ENCODE measurements at regions of chr9 and their contacts with region 1.

Region 1: DNA sequence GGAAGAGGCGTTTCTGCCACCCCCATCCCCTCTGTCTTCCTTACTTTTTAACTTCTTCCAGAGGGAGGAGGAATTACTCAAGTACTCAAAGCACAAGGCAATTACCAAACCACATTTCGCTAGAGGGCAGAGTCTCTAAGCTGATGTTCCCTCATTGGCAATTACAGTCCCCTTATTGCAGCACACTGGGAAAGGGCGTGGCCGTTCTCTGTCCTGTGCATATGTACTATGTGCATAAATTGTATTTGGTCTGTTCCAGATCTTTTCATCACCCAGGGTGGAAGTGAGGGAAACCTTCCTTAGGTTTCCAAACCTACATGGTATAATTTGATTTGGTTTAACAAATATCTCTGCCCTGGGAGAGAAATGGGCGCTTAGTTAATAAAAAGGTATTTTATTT is 29.8 kb upstream of the ALDOB start:
- DNase-seq: peak; percentile 25
- ATAC-seq: peak; percentile 65
- H3K4me3 Mint-ChIP-seq: no peak overlapping the region
- H3K27ac Mint-ChIP-seq: no peak overlapping the region
- H3K4me1 Mint-ChIP-seq: peaks cover 66% of the 10 kb centered on the region
- H3K27me3 Mint-ChIP-seq: no peaks in the 10 kb centered on the region
- CTCF ChIP-seq: no peak

Region 2: DNA sequence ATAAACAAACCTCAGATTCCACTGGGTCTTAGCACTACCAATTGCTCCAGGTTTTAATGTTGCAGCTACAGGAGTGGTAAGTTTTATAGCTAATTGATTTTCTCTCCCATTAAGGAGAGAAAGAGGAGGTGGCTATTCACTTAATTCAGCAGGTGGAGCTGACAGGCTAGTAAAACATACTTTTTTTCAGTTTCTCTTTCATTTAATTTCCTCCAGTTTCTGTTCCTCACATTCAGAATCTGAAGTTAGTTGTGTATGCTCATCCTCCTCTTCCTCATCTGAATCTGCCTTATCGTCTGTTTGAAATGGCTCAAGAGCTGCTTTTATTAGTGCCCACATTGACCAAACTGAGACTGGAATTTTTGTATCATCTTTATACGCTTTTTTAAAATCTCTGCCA is 338.8 kb before region 1 on chr9:
- CTCF ChIA-PET with region 1: no interaction called
- POLR2A ChIA-PET with region 1: no interaction called
- DNase-seq: no peak
- ATAC-seq: no peak
- H3K4me3 Mint-ChIP-seq: no peak overlapping the region
- H3K27ac Mint-ChIP-seq: no peak overlapping the region
- H3K4me1 Mint-ChIP-seq: peaks cover 6% of the 10 kb centered on the region
- H3K27me3 Mint-ChIP-seq: peaks cover 2% of the 10 kb centered on the region
- CTCF ChIP-seq: no peak

Region 3: DNA sequence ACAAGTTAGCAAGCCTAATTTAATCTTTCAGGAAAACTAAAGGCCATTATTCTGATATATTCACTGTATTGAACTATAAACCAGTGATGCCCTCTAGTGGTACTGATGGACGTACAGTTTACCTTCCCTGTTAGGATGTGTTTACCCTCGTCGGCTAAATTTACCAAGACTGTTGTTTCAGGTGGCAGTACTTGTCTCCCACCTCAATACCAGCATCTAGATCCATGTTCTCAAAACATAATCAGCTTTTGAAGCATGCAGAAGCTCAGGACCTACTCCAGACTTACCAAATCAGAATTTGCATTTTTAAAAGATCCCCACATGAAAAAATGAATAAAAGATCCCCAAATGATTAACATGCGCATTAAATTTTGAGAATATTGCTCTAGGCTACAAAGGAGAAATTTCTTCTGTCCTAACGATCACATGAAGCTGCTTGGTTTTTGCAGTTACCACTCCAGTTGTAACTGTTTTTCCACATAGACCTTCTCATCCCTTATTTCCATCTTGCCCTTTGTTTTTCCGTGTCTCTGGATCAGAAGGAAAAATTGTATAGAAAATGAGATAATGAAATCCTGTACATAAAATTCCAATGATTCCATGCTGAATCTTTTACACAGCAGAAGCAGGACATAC is 77.4 kb before region 1 on chr9:
- CTCF ChIA-PET with region 1: interaction called, 11 read pairs
- POLR2A ChIA-PET with region 1: no interaction called
- DNase-seq: no peak
- ATAC-seq: peak; percentile 94
- H3K4me3 Mint-ChIP-seq: no peak overlapping the region
- H3K27ac Mint-ChIP-seq: peak overlapping the region; percentile 93
- H3K4me1 Mint-ChIP-seq: peaks cover 28% of the 10 kb centered on the region
- H3K27me3 Mint-ChIP-seq: no peaks in the 10 kb centered on the region
- CTCF ChIP-seq: peak; percentile 32

Region 4: DNA sequence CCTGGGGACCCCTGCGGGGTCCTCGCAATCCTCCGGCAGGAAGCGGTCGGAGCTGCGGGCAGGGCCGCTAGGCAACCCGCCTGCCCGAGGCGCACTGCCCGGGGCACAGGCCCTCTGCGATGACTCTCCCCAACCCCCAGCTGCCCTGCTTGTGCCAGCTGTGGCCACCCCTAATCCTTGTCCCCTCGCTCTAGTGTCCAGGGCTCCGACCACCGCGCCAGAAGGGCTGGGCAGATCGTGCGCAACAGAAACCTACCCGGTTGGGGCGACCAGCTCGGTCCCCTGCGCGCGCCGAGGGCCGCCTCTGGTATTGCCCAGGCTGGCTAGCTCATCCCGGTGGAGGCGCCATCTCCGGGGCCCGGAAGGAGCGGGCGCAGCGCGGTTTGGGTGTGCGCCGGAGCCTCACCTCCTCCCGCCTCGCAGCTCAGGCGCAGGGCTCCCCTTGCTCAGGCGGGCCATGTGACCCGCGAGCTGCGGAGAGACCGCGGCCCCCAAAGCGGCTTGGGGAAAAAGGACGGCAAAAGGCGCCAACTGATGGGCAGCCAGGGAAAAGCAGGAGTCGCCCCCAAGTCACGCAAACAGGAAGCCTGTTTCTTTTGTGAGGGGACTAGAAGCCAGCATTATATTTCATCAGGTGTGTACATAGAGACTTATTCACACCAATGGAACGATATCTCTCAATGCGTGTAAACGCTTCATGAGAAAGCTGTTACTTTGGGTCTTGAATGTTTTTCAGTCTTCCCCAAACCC is 21.5 kb after region 1 on chr9:
- CTCF ChIA-PET with region 1: interaction called, 13 read pairs
- POLR2A ChIA-PET with region 1: interaction called, 9 read pairs
- DNase-seq: peak; percentile 82
- ATAC-seq: peak; percentile 92
- H3K4me3 Mint-ChIP-seq: peak overlapping the region; percentile 90
- H3K27ac Mint-ChIP-seq: peak overlapping the region; percentile 89
- H3K4me1 Mint-ChIP-seq: peaks cover 22% of the 10 kb centered on the region
- H3K27me3 Mint-ChIP-seq: peaks cover 6% of the 10 kb centered on the region
- CTCF ChIP-seq: no peak

Region 5: DNA sequence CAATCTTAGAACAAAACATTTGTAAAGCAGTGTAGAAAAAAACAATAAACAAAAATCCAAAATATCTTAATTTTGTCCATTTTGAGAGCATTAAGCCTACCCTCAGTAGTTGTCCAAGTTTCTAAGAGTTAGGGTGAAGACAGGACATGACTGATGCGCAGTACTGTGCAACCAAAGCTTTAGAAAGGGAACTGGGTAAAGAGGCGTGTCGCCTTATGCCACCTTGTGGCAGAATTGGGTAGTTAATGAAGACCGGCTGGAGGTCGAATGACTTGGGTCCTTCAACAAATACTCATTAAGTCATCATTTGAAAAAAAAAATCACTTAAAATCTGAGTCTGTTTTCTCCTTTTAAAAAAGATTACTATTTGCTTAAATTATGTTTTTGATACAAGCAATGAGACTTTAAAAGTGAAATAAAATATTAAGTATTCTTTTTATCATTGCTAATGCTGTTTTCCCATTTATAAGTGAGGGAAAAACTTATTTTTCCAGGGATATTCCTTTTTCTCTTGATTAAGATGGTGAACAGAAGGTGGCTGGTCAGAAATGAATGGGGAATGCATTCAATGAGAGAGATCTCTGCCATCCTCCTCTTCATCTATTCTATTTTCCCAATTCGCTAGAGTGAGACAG is 64.8 kb after region 1 on chr9:
- CTCF ChIA-PET with region 1: interaction called, 18 read pairs
- POLR2A ChIA-PET with region 1: interaction called, 3 read pairs
- DNase-seq: peak; percentile 73
- ATAC-seq: peak; percentile 43
- H3K4me3 Mint-ChIP-seq: no peak overlapping the region
- H3K27ac Mint-ChIP-seq: no peak overlapping the region
- H3K4me1 Mint-ChIP-seq: peaks cover 12% of the 10 kb centered on the region
- H3K27me3 Mint-ChIP-seq: no peaks in the 10 kb centered on the region
- CTCF ChIP-seq: peak; percentile 61

Region 6: DNA sequence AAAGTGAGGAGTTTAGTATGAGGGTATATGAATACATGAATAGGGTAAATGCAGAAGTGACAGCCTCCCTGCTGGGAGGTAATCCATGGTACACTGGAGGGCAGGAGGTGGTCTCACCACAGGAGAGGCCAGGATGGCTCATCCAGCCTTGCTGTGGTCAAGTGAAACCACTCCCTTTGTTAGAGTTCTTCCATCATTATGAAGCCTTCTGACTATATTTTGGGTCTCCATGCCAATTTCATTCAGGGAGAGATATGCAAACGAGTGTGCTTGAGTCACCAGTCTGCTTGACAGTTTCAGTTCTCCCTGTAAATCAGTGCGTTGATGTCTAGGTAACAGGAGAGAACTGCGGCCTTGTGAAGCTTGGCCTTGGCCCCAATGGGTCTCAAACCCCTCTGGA is 113.0 kb after region 1 on chr9:
- CTCF ChIA-PET with region 1: no interaction called
- POLR2A ChIA-PET with region 1: no interaction called
- DNase-seq: no peak
- ATAC-seq: no peak
- H3K4me3 Mint-ChIP-seq: no peak overlapping the region
- H3K27ac Mint-ChIP-seq: no peak overlapping the region
- H3K4me1 Mint-ChIP-seq: peaks cover 32% of the 10 kb centered on the region
- H3K27me3 Mint-ChIP-seq: no peaks in the 10 kb centered on the region
- CTCF ChIP-seq: no peak

Measured in WTC11 (cell line).